ENCODE measurements at regions of chr12 and their contacts with region 1.

Region 1: DNA sequence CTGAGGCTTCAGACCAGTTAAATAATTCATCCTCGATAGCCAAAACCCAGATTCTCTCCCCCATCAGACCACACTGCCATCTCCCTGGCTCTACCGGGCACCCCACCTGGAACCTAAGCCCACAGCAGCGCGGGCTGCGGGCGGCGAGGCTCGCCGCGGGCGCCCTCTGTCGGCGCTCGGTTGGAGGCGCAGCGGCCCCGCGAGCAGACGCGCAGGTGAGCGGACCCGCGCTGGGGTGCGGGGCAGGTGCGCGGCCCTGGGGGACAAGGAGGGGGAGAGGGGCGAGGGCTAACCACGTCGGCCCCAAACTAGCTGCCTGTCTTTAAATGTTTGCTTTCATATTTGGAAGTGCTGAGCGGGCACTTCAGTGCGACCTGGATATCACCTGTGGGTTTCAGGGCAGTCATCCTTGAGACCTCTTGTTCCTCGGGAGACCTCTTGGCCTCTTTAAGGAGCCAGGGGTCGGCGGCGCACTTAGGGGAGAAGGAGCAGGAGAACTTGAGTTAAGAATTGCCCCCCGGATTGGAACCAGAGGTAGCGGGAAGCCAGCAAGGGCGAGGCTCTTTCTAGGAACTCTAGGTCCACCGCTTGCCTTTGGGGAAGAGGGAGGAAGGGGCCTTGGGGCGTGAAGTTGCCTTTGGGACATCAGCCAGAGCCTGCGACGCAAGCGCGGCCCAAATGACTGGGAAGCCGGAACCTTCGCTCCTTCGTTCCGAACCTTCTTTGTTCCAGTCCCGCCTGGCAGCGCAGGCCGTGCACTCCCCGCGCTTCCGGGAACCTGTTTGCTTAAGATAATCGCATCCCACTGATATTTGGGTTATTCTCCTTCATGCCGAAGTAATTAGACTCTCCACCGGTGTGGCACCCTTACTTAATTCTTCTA is 78.7 kb downstream of the NEDD1 start:
- DNase-seq: peak in 1 of 2 experiments; percentile 57
- H3K4me3 ChIP-seq: peak overlapping the region; percentile 21
- H3K4me3 Mint-ChIP-seq: peak overlapping the region; percentile 71
- H3K27ac Mint-ChIP-seq: no peak overlapping the region
- H3K4me1 ChIP-seq: peaks cover 5% of the 10 kb centered on the region; the same call in 1 of the 2 replicates
- H3K4me1 Mint-ChIP-seq: no peaks in the 10 kb centered on the region
- H3K27me3 ChIP-seq: no peaks in the 10 kb centered on the region; the same call in 1 of the 2 replicates
- H3K27me3 Mint-ChIP-seq: peaks cover 13% of the 10 kb centered on the region
- CTCF ChIP-seq: peak; percentile 66 to 85

Region 2: GRCh38 chr12:96578526-96579125 is 407.1 kb before region 1 on chr12:
- CTCF ChIA-PET with region 1: interaction called, 3 read pairs
- POLR2A ChIA-PET with region 1: no interaction called
- intact Hi-C with region 1: loop called (anchors 1 kb)
- DNase-seq: peak in 1 of 2 experiments; percentile 33
- H3K4me3 ChIP-seq: no peak overlapping the region
- H3K4me3 Mint-ChIP-seq: no peak overlapping the region
- H3K27ac Mint-ChIP-seq: no peak overlapping the region
- H3K4me1 ChIP-seq: no peaks in the 10 kb centered on the region
- H3K4me1 Mint-ChIP-seq: no peaks in the 10 kb centered on the region
- H3K27me3 ChIP-seq: no peaks in the 10 kb centered on the region
- H3K27me3 Mint-ChIP-seq: peaks cover 3% of the 10 kb centered on the region
- CTCF ChIP-seq: peak; percentile 45 to 54

Region 3: DNA sequence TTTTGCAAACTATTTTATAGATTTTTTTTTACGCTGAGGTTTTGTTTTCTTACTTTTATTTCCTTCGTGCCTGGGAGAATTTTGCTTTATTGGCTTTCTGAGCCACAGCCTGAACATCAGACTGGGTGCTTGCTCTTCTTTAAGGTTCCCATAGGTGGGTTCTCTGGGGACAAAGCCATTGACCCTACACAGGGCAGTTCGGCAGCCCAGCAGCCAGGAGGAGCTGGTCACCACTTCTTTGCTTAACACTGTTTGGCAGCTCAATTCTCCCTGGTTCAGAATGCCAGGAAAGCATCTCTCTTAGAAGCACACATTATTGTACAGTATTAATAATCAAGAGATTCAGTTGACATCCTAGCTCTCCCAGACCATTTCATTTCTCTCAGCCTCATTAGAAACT is 219.5 kb before region 1 on chr12:
- CTCF ChIA-PET with region 1: interaction called, 3 read pairs
- POLR2A ChIA-PET with region 1: no interaction called
- intact Hi-C with region 1: loop called (anchors 2 kb)
- DNase-seq: peak in 1 of 2 experiments; percentile 12
- H3K4me3 ChIP-seq: no peak overlapping the region
- H3K4me3 Mint-ChIP-seq: no peak overlapping the region
- H3K27ac Mint-ChIP-seq: no peak overlapping the region
- H3K4me1 ChIP-seq: no peaks in the 10 kb centered on the region
- H3K4me1 Mint-ChIP-seq: peaks cover 7% of the 10 kb centered on the region
- H3K27me3 ChIP-seq: no peaks in the 10 kb centered on the region
- H3K27me3 Mint-ChIP-seq: peaks cover 3% of the 10 kb centered on the region
- CTCF ChIP-seq: peak; percentile 26 to 66

Region 4: DNA sequence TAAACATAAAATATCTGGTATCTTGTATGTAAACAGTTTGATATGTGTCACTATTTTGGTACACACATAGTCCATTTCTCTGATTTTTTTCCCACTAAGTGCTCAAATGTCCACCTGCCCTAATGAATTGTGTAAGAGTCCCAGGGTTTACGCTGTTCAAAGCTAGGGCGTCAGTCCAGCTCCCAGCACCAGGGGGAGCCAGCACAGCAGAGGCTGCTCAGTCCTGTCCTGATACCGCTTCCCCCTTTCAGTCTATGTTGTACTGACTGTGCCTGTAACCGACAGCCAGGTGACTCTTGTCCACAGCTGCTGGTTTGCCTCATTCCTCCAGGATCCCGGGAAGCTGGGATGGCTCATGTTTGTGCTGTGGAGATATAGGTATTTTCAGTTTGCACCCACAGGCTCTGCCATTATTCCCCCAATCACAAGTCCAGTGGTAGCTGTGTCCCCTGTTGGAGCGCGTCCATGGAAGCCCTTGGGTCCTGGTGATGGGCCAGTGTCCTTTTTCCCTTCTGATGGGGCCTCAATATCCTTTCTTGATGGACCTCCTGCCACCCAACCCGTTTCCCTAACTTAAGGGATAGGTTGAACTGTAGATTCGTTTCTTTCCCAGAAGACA is 163.3 kb after region 1 on chr12:
- CTCF ChIA-PET with region 1: interaction called, 3 read pairs
- POLR2A ChIA-PET with region 1: no interaction called
- intact Hi-C with region 1: loop called (anchors 5 kb)
- DNase-seq: peak; percentile 72 to 85
- H3K4me3 ChIP-seq: no peak overlapping the region
- H3K4me3 Mint-ChIP-seq: no peak overlapping the region
- H3K27ac Mint-ChIP-seq: no peak overlapping the region
- H3K4me1 ChIP-seq: no peaks in the 10 kb centered on the region
- H3K4me1 Mint-ChIP-seq: no peaks in the 10 kb centered on the region
- H3K27me3 ChIP-seq: no peaks in the 10 kb centered on the region
- H3K27me3 Mint-ChIP-seq: peaks cover 9% of the 10 kb centered on the region
- CTCF ChIP-seq: peak; percentile 88 to 94

Region 5: GRCh38 chr12:97181571-97182265 is 196.0 kb after region 1 on chr12:
- CTCF ChIA-PET with region 1: no interaction called
- POLR2A ChIA-PET with region 1: no interaction called
- intact Hi-C with region 1: no loop called
- DNase-seq: no peak
- H3K4me3 ChIP-seq: no peak overlapping the region
- H3K4me3 Mint-ChIP-seq: no peak overlapping the region
- H3K27ac Mint-ChIP-seq: no peak overlapping the region
- H3K4me1 ChIP-seq: no peaks in the 10 kb centered on the region
- H3K4me1 Mint-ChIP-seq: peaks cover 5% of the 10 kb centered on the region
- H3K27me3 ChIP-seq: no peaks in the 10 kb centered on the region
- H3K27me3 Mint-ChIP-seq: no peaks in the 10 kb centered on the region
- CTCF ChIP-seq: no peak

Region 6: GRCh38 chr12:97275256-97275655 is 289.5 kb after region 1 on chr12:
- CTCF ChIA-PET with region 1: no interaction called
- POLR2A ChIA-PET with region 1: no interaction called
- intact Hi-C with region 1: no loop called
- DNase-seq: no peak
- H3K4me3 ChIP-seq: no peak overlapping the region
- H3K4me3 Mint-ChIP-seq: no peak overlapping the region
- H3K27ac Mint-ChIP-seq: no peak overlapping the region
- H3K4me1 ChIP-seq: no peaks in the 10 kb centered on the region
- H3K4me1 Mint-ChIP-seq: no peaks in the 10 kb centered on the region
- H3K27me3 ChIP-seq: no peaks in the 10 kb centered on the region
- H3K27me3 Mint-ChIP-seq: no peaks in the 10 kb centered on the region
- CTCF ChIP-seq: no peak

Region 7: GRCh38 chr12:97404543-97404942 is 418.8 kb after region 1 on chr12:
- CTCF ChIA-PET with region 1: no interaction called
- POLR2A ChIA-PET with region 1: no interaction called
- intact Hi-C with region 1: loop called (anchors 2 kb)
- DNase-seq: peak; percentile 61 to 62
- H3K4me3 ChIP-seq: no peak overlapping the region
- H3K4me3 Mint-ChIP-seq: no peak overlapping the region
- H3K27ac Mint-ChIP-seq: no peak overlapping the region
- H3K4me1 ChIP-seq: no peaks in the 10 kb centered on the region
- H3K4me1 Mint-ChIP-seq: no peaks in the 10 kb centered on the region
- H3K27me3 ChIP-seq: no peaks in the 10 kb centered on the region
- H3K27me3 Mint-ChIP-seq: no peaks in the 10 kb centered on the region
- CTCF ChIP-seq: peak; percentile 85

Region 8: DNA sequence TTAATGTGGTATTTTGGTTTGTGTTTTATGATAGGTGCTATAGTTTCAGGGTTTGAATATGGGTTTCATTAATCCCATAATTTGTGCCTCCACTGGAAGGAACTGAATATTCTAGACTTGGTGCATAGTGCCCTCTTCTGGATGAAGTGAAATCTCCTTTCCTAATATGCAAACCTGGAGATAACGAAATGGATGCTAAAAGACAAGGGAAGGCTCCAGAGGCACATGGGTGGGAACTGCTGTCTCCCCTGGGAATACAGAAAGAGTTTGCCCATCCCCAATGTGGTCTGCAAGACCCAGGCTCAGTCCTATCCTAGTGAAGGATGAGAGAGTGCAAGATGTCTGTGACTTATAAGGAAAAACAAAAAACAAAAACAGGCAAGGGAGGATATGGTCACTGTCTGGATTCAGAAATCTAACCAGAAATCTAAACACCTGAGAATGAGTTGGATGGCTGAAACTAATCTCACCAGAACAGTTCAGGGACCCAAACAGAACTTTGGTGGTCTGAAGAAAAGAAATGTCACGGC is 1387.4 kb after region 1 on chr12:
- CTCF ChIA-PET with region 1: no interaction called
- POLR2A ChIA-PET with region 1: no interaction called
- intact Hi-C with region 1: loop called (anchors 10 kb)
- DNase-seq: peak in 1 of 2 experiments; percentile 56
- H3K4me3 ChIP-seq: no peak overlapping the region
- H3K4me3 Mint-ChIP-seq: no peak overlapping the region
- H3K27ac Mint-ChIP-seq: no peak overlapping the region
- H3K4me1 ChIP-seq: no peaks in the 10 kb centered on the region
- H3K4me1 Mint-ChIP-seq: peaks cover 7% of the 10 kb centered on the region
- H3K27me3 ChIP-seq: no peaks in the 10 kb centered on the region
- H3K27me3 Mint-ChIP-seq: peaks cover 1% of the 10 kb centered on the region
- CTCF ChIP-seq: peak; percentile 54 to 68